ENCODE measurements at regions of chr20 and their contacts with region 1.

Region 1: DNA sequence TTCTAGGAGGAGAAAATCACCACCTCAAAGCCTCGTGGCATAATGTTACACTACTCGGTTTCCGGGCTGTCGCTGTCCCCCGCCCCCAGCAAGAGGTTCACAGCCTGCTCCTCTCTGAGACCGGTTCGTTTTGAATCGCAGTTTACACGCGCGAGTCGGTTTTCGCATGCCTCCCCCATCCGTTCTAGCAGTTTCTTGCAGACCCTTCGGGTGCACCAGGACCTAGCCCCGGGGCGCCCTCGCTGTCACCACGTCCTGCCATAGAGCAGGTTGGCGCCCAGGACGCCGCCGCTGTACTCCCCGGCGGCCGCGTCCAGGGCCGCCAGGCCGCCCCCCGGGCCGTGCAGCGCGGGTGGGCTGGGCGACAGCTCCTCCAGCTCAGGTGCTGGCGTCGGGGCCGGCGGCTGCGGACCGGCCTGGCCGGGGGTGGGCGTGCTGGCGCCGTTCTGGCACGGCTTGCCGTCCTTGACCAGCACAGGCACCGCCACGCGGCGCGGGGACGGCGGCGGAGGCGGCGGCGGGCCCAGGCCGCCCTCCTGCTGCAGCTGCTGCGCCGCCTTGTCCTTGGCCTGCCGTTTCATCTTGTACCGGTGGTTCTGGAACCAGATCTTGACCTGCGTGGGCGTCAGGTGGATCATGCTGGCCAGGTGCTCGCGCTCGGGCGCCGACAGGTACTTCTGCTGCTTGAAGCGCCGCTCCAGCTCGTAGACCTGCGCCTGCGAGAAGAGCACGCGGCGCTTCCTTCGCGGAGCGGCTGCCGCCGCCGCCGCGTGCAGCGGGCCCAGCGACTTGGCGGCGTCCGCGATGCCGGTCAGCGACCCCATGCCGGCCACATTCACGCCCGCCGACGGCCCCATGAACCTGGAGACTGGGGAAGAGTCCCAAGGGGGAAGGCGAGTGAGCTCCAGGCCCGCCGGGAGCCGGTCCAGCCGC is 1.4 kb downstream of the NKX2-4 start:
- DNase-seq: peak; percentile 54
- H3K4me3 Mint-ChIP-seq: peak overlapping the region; percentile 50
- H3K27ac Mint-ChIP-seq: no peak overlapping the region
- H3K4me1 Mint-ChIP-seq: peaks cover 18% of the 10 kb centered on the region
- H3K27me3 Mint-ChIP-seq: peaks cover 71% of the 10 kb centered on the region

Region 2: DNA sequence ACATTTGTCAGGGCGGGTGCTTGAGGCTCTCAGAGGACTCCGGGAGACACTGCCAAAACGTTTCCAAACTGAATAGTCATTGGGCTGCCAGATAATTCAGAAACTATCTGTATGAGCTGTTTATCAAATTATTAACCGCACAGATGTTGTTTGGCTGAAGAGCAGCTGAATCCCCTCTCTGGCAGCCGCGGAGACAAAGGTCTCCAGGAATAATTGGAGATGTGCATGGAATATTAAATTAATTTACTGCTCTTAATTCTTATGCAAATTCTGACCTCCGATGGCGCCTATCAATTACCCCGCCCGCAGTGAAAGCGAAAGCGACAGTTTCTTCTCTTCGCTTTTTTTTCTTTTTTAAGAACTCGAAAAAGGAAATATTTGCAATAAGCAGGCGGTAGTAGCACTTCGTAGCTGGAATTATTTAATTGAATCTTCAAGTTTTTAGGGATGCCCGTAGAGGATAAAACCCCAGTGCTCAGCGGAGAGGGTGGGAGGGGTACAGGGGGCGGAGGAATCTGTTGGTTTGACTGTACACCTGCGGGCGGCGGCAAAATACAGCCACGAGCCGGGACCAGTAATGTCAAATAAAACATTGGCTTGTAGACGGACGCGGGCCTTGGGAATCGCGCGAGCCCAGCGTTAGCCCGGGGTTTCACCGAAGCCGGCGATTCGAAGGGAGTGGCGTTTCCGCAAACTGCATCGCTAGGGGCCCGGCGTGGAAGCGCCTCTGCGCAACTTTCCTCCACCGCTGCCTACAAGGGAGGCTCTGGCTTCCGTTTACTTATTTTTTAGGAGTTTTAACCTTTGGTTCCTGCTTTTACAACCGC is 296.0 kb before region 1 on chr20:
- CTCF ChIA-PET with region 1: no interaction called
- intact Hi-C with region 1: loop called (anchors 1 kb)
- DNase-seq: peak; percentile 65
- H3K4me3 Mint-ChIP-seq: peak overlapping the region; percentile 78
- H3K27ac Mint-ChIP-seq: no peak overlapping the region
- H3K4me1 Mint-ChIP-seq: peaks cover 32% of the 10 kb centered on the region
- H3K27me3 Mint-ChIP-seq: peaks cover 75% of the 10 kb centered on the region

Region 3: GRCh38 chr20:21303061-21303871 is 92.7 kb before region 1 on chr20 and contains the start of gene XRN2:
- CTCF ChIA-PET with region 1: no interaction called
- intact Hi-C with region 1: loop called (anchors 2 kb)
- DNase-seq: peak; percentile 96
- H3K4me3 Mint-ChIP-seq: peak within 1 kb of the TSS; percentile 94
- H3K27ac Mint-ChIP-seq: peak within 1 kb of the TSS; percentile 96
- H3K4me1 Mint-ChIP-seq: peaks cover 29% of the 10 kb centered on the region
- H3K27me3 Mint-ChIP-seq: no peaks in the 10 kb centered on the region
- total RNA-seq, gene XRN2: 76.5 to 81.9 TPM

Region 4: GRCh38 chr20:21702553-21703470 is 306.9 kb after region 1 on chr20:
- CTCF ChIA-PET with region 1: no interaction called
- intact Hi-C with region 1: loop called (anchors 10 kb)
- DNase-seq: peak; percentile 71
- H3K4me3 Mint-ChIP-seq: no peak overlapping the region
- H3K27ac Mint-ChIP-seq: no peak overlapping the region
- H3K4me1 Mint-ChIP-seq: peaks cover 12% of the 10 kb centered on the region
- H3K27me3 Mint-ChIP-seq: peaks cover 83% of the 10 kb centered on the region